Gastrocnemius medialis (tissue), 4 donors: ENCODE measurements at regions of chr7 and their contacts with region 1.

Region 1: GRCh38 chr7:25389489-25390106 is 161.3 kb upstream of the NPVF start:
- DNase-seq: no peak
- ATAC-seq: no peak
- H3K4me3 ChIP-seq: no peak overlapping the region
- H3K27ac ChIP-seq: no peak overlapping the region
- H3K4me1 ChIP-seq: no peaks in the 10 kb centered on the region
- H3K27me3 ChIP-seq: no peaks in the 10 kb centered on the region
- CTCF ChIP-seq: peak in 2 of 5 experiments; percentile 29 to 39
- POLR2A ChIP-seq: no peak

Region 2: GRCh38 chr7:25557379-25557917 is 167.8 kb after region 1 on chr7:
- in situ Hi-C with region 1: loop called (anchors 5 to 10 kb)
- intact Hi-C with region 1: no loop called
- DNase-seq: no peak
- ATAC-seq: no peak
- H3K4me3 ChIP-seq: no peak overlapping the region
- H3K27ac ChIP-seq: no peak overlapping the region
- H3K4me1 ChIP-seq: peaks cover 0 to 6% of the 10 kb centered on the region in 2 donors
- H3K27me3 ChIP-seq: peaks cover 0 to 2% (median 0%) of the 10 kb centered on the region in 3 donors
- CTCF ChIP-seq: no peak
- POLR2A ChIP-seq: no peak

Region 3: DNA sequence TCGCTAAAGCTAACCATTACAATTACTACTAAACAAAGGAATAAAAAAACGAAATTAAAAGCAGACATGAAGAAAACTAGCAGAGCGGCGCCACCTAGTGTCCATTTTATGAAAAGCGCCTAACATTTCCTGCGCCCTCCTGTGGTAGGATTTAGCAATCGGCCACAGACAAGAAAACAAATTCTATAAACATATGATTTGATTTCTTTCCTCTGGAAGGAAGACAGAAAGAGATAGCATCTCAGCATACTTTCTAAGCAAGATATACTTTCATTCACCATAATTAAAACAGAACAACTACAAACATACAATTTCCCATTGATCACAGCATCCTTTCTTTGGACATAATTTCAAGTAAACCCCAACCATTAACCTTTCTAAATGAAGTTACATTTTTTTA is 176.4 kb after region 1 on chr7:
- in situ Hi-C with region 1: loop called in 3 of 4 experiments (anchors 5 to 10 kb)
- intact Hi-C with region 1: loop called (anchors 1 kb)
- DNase-seq: peak; percentile 38 to 49
- ATAC-seq: peak; percentile 40 to 76
- H3K4me3 ChIP-seq: peak overlapping the region in 1 of 4 donors; percentile 30
- H3K27ac ChIP-seq: no peak overlapping the region
- H3K4me1 ChIP-seq: peaks cover 13 to 21% of the 10 kb centered on the region in 2 donors
- H3K27me3 ChIP-seq: no peaks in the 10 kb centered on the region
- CTCF ChIP-seq: peak; percentile 91 to 100 (median 99)
- POLR2A ChIP-seq: no peak